ENCODE measurements at regions of chr12 and their contacts with region 1.

Region 1: DNA sequence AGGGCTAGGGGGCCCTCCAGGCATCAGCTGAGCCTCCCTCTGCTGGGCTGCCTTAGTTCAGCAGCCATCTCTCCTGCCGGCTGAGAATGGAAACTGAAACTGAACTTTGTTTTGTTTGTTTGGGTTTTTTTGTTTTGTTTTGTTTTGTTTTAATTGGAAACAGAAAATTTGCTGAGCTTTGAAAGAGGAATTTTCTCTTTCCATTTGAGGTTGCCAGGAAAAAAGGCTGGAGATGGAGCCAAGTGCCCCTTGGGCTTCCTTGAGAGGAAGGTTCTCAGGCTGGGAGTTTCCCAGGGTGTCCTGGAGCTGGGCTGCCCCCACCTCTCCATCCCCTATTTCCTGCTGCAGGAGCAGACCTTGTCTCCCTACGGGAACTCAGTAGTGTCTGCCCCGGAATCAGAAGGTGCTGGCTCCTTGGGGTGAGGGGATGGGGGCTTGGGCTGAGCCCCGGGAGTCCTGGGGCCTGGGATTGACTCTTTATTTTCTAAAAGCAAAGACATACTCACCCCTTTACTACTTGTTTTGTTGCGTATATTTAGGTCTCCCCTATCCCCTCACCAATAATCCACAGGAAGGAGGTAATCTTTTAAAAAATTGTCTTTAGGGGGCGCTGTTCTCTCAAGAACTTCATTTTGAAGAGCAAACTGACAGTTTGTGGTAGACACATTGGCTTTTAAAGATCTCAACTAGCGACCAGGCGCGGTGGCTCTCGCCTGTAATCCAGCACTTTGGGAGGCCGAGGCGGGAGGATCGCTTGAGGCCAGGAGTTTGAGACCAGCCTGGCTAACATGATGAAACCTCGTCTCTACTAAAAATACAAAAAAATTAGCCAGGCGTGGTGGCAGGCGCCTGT is 21.3 kb upstream of the OASL start:
- DNase-seq: peak; percentile 85
- H3K4me3 ChIP-seq: peak overlapping the region in 7 of 8 donors; percentile 21 to 66 (median 37)
- H3K27ac ChIP-seq: peak overlapping the region; percentile 65 to 90 (median 88)
- H3K4me1 ChIP-seq: peaks cover 6 to 22% (median 14%) of the 10 kb centered on the region in 6 donors
- H3K27me3 ChIP-seq: no peaks in the 10 kb centered on the region
- CTCF ChIP-seq: peak in 10 of 11 experiments; percentile 47 to 80 (median 70)
- POLR2A ChIP-seq: no peak

Region 2: DNA sequence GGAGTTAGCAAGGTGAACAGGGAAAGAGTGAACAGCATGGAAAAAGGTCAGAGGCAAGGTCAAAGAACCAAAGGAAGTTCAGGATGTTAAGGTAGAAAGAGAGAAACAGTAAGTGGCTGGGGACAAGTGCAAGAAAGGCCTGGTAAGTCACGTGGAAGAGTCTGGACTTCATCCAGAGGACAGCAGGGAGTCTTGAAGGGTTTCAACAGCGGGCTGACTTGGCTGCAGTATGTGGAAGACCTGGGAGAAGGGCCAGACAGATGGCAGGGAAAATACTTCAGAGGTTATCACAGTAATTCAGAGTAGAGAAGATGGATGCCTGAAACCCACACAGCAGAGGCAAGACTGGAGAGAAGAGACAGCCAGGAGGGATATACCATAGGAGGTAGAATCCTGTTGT is 1217.3 kb before region 1 on chr12:
- intact Hi-C with region 1: no loop called
- DNase-seq: no peak
- H3K4me3 ChIP-seq: no peak overlapping the region
- H3K27ac ChIP-seq: no peak overlapping the region
- H3K4me1 ChIP-seq: no peaks in the 10 kb centered on the region
- H3K27me3 ChIP-seq: no peaks in the 10 kb centered on the region
- CTCF ChIP-seq: no peak
- POLR2A ChIP-seq: no peak

Region 3: GRCh38 chr12:120677765-120678473 is 382.5 kb before region 1 on chr12:
- intact Hi-C with region 1: no loop called
- DNase-seq: no peak
- H3K4me3 ChIP-seq: no peak overlapping the region
- H3K27ac ChIP-seq: peak overlapping the region; percentile 61 to 86 (median 79)
- H3K4me1 ChIP-seq: peaks cover 13 to 56% (median 38%) of the 10 kb centered on the region in 6 donors
- H3K27me3 ChIP-seq: no peaks in the 10 kb centered on the region
- CTCF ChIP-seq: no peak
- POLR2A ChIP-seq: no peak

Region 4: DNA sequence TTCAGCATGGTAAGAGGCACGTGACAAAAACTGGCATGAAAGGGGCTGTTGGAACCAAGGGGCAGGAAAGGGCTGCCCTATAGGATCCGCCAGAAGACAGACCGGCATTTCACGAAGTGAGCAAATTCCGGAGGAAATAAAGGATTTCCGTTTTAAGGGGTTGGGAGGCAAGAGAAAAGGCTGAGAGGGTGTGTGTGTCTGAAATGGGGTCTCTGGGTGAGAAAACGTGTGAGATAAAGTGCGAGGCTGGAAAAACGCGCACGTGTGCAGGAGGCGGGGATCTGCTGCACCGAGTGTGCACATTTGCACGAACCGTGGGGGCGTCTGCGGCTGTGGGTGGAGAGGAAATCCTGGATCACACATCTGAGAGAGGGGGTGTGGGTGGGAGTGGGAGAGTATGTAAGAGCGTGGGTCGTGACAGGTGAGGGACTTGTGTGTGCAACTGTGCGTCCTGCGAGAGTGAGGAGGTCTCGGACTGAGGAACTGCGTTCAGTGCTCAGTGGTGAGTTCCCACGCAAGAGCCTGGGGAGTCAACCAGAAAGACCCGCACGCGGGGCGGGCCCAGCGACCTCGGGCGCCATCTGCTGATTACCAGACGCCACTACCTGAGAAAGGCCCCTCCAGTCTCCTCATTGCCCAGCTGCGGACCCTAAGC is 35.3 kb after region 1 on chr12:
- intact Hi-C with region 1: loop called (anchors 5 kb)
- DNase-seq: peak; percentile 95
- H3K4me3 ChIP-seq: peak overlapping the region in 7 of 8 donors; percentile 27 to 65 (median 36)
- H3K27ac ChIP-seq: peak overlapping the region in 4 of 8 donors; percentile 18 to 54 (median 45)
- H3K4me1 ChIP-seq: peaks cover 11 to 52% (median 33%) of the 10 kb centered on the region in 6 donors
- H3K27me3 ChIP-seq: no peaks in the 10 kb centered on the region
- CTCF ChIP-seq: peak; percentile 57 to 88 (median 83)
- POLR2A ChIP-seq: no peak

Region 5: GRCh38 chr12:121230538-121230907 is 170.1 kb after region 1 on chr12:
- intact Hi-C with region 1: loop called (anchors 2 kb)
- DNase-seq: peak; percentile 62
- H3K4me3 ChIP-seq: no peak overlapping the region
- H3K27ac ChIP-seq: peak overlapping the region in 1 of 8 donors; percentile 28
- H3K4me1 ChIP-seq: peaks cover 0 to 23% (median 9%) of the 10 kb centered on the region in 6 donors
- H3K27me3 ChIP-seq: no peaks in the 10 kb centered on the region
- CTCF ChIP-seq: peak in 6 of 11 experiments; percentile 2 to 54 (median 28)
- POLR2A ChIP-seq: no peak